PC-9 (cell line): ENCODE measurements at regions of chr9 and their contacts with region 1.

Region 1: DNA sequence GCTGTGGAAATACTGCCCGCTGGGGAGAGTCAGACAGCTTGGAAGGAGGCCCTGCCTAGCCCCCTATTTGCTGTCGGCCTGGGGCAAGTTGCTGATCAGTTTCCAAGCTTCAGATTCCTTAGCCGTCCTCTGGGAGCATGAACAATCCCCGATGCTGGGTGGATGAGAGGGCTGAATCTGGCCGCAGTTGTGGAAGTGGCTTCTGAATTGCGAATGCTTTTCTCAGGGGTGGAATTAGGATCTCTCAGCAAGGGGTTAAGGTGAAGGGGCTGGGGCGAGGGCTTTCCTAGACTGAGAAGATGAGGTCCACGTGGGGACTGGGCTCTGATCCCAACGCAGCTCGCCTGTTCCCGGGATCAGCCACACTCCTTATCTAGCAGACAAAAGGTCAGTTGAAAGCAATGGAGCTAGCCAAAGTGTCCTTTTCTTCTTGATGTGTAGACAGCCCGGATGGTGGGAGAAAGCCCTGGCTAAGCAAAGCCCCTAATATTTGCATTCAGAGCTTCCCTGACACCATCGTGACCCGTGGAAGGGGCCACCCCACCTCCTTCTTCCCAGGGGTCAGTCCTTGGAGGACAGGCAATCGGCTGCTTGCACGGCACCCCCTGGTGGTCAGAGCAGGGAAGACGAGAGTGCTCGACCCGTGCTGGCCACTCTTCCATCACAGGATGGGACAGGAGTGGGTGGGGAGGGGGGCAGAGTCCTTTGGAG is 54.9 kb downstream of the COL15A1 start:
- DNase-seq: peak in 1 of 2 experiments; percentile 67
- H3K4me3 ChIP-seq: no peak overlapping the region
- H3K27ac ChIP-seq: no peak overlapping the region
- H3K4me1 ChIP-seq: no peaks in the 10 kb centered on the region
- H3K27me3 ChIP-seq: no peaks in the 10 kb centered on the region
- CTCF ChIP-seq: peak; percentile 88

Region 2: DNA sequence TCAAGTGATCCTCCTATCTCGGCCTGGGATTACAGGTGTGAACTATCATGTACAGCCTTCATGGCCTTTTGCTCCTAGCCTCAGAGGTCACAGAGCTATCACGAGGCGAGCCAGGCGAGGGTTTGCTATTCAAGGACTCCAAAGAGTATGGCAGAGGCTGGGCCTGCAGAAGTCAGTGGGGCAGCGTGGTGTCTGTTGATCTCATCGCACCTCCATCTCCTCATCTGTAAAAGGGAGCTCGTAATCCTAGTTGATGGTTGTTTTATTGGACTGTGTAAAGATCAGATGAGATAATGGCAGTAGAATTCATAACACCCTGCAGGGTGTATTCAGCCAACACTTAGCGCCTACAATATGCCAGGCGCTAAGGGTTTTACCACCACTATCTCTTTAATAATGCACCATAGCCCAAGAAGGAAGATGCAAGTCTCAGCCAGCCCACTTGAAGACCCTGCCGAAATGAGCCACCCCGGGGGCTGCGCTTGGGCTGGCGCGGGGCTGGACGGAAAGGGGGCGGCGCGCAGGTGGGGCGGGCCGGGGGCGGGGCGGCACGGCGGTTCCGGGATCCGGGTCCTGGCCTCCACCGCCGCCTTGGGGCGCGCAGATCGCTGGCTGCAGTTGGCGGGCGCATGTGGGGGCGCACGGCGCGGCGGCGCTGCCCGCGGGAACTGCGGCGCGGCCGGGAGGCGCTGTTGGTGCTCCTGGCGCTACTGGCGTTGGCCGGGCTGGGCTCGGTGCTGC is 191.4 kb before region 1 on chr9 and contains the start of gene GALNT12:
- CTCF ChIA-PET with region 1: interaction called, 3 read pairs
- POLR2A ChIA-PET with region 1: no interaction called
- intact Hi-C with region 1: loop called (anchors 1 kb)
- DNase-seq: peak; percentile 40 to 56
- H3K4me3 ChIP-seq: peak within 1 kb of the TSS; percentile 87
- H3K27ac ChIP-seq: peak within 1 kb of the TSS; percentile 77
- H3K4me1 ChIP-seq: peaks cover 86% of the 10 kb centered on the region
- H3K27me3 ChIP-seq: no peaks in the 10 kb centered on the region
- CTCF ChIP-seq: no peak
- total RNA-seq, gene GALNT12: 50.3 and 52.9 TPM in 2 replicates

Region 3: DNA sequence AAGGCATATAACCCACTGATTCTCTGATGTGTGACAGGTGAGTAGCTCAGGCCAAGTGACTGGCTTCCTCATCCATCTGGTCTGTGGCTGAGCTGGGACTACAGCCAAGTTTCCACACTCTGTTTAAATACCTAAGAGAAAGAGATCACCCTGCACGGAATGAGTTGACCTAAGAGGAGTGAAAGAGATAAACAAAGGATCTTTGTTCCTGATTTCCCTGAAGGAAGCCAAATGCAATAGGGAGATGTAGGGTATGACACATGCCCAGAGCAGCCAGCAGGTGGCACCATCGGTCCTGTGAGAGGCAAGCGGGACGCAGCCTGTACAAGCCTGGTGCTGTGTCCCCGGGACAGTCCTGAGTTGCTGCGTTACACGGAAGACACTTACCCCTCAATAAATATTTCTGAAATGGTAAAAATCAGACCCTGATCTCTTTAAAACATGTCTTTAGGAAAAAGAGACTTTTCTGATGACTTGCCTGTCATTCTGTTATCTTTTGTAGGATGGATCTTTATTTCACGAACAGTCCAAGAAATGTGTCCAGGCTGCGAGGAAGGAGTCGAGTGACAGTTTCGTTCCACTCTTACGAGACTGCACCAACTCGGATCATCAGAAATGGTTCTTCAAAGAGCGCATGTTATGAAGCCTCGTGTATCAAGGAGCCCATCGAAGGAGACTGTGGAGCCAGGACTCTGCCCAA is 150.0 kb before region 1 on chr9:
- CTCF ChIA-PET with region 1: no interaction called
- POLR2A ChIA-PET with region 1: interaction called, 5 read pairs
- intact Hi-C with region 1: loop called (anchors 1 kb)
- DNase-seq: peak; percentile 90 to 95
- H3K4me3 ChIP-seq: no peak overlapping the region
- H3K27ac ChIP-seq: peak overlapping the region; percentile 48
- H3K4me1 ChIP-seq: peaks cover 22% of the 10 kb centered on the region
- H3K27me3 ChIP-seq: no peaks in the 10 kb centered on the region
- CTCF ChIP-seq: peak; percentile 89

Region 4: GRCh38 chr9:99057665-99058625 is 59.3 kb after region 1 on chr9:
- CTCF ChIA-PET with region 1: no interaction called
- POLR2A ChIA-PET with region 1: no interaction called
- intact Hi-C with region 1: loop called (anchors 10 kb)
- DNase-seq: no peak
- H3K4me3 ChIP-seq: no peak overlapping the region
- H3K27ac ChIP-seq: peak overlapping the region; percentile 40
- H3K4me1 ChIP-seq: peaks cover 58% of the 10 kb centered on the region
- H3K27me3 ChIP-seq: no peaks in the 10 kb centered on the region
- CTCF ChIP-seq: no peak

Region 5: GRCh38 chr9:99140685-99141314 is 142.2 kb after region 1 on chr9:
- CTCF ChIA-PET with region 1: interaction called, 10 read pairs
- POLR2A ChIA-PET with region 1: interaction called, 3 read pairs
- intact Hi-C with region 1: loop called (anchors 1 kb)
- DNase-seq: peak in 1 of 2 experiments; percentile 34
- H3K4me3 ChIP-seq: no peak overlapping the region
- H3K27ac ChIP-seq: no peak overlapping the region
- H3K4me1 ChIP-seq: no peaks in the 10 kb centered on the region
- H3K27me3 ChIP-seq: no peaks in the 10 kb centered on the region
- CTCF ChIP-seq: peak; percentile 74